ENCODE measurements at regions of chr1 and their contacts with region 1.

Region 1: DNA sequence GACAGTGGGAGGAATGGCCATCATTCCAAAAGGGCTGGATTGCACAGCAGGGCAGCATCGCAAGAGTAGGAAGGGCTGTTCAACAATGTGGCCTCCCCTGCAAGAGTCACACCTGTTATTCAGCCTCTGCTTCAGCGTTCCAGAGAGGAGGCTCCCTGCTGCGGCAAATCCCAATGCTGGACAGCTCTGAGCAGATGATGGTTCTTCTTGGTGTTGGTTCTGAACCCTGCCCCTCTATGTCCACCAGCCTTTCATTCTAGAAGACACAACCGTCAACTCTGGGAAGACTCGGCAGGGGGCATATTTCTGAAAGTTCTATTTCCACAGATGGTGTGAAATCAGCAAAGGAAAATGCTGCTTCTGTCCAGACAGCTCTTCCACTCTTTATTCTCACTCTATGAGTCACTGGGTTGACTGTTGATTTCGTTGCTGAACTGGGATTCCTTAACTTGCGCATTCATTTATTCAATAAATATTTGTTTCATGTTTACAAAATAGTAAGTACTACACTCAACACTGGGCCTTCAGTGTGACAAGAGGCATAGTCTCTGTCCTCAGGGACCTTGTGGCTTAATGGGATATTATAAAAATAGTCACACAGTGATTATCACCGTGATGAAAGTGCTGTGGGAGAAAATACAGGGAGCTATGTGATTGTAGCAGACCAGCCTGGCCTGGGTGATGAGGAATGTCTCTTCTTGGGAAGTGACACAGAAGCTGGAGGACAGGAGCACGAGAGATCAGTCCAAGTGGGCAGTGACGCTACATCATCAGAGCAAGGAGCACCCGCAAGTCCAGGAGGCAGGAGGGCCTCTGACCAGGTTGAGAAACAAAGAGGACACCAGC is 260.3 kb downstream of the SIPA1L2 start:
- DNase-seq: no peak

Region 2: DNA sequence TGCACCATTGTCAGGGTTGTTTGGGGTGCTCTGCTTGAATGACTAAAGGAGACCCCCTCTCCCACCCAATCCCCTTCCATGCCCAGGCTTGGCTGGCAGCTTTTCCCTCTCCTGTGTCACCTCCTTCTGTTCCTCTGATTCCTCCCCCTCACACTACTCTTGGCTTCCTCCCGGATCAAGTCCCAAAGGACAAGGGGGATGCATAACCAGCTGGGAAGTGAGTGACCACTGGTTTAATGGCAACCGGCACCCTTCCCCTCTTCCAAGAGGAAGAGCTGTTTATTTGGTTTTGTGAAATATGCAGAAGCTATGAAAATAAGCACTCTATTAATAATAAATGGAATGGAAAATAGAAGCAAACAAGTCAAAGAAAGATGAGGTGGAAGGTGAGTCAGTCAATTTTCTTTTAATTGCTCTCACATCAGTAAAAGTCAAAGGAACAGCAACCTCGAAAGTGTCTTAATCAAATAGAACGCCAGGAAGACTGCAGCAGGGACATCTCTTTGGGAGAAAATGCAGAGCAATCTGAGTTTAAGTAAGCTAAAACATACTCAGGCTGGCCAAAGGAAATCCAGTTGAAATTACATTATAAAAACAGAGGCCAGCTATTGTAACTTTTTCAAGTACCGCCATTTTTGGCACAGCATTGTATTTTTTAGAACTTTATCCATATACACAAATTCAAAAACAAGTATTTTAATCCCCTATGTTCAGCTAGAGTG is 62.2 kb before region 1 on chr1:
- intact Hi-C with region 1: loop called in 1 of 2 experiments (anchors 2 kb)
- DNase-seq: no peak

Region 3: DNA sequence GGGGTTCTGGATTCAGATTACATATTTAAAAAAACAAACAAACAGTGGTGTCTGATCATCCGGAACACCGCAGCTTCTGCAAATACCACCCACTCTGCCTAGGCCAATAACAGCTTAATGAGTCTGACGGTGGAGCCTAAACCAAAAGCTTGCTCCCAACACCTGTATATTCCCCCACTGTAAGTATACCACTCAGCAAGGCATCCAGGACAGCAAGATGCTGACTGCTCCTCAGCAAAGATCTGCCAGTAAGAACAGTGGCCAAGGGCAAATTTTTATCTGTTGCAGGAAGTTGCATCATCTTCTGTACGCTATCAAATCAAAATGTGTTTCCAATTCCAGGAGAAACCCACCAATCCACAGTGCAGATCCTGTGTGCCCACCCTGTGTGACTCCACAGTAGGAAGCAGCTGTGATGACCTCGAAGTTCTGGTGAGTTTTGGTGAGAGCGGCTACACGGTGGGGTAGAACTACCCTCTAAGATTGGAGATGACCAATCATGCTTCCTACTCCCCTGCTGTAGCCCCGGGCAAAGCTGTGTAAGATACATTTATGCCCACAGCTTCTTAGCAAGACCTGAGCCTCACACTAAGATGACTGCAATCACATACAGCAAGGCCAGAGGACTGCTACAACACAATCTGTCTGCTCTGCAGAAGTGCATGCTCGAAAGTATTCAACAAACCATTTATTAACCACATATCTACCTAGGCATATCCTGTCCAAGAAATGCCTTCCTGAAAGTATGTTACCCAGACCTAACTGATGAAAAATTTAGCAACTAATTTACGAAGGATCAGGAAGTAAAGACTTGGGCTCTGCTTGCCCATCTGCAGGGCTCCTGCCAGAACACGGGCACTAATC is 229.7 kb after region 1 on chr1:
- intact Hi-C with region 1: no loop called
- DNase-seq: no peak

Measured in posterior vena cava (tissue), 2 donors.